ENCODE measurements at regions of chr6 and their contacts with region 1.

Region 1: GRCh38 chr6:1389369-1390132 is at the start of gene FOXF2:
- DNase-seq: no peak
- ATAC-seq: no peak
- H3K4me3 ChIP-seq: no peak within 1 kb of the TSS
- H3K4me3 Mint-ChIP-seq: peak within 1 kb of the TSS; percentile 74
- H3K27ac ChIP-seq: no peak within 1 kb of the TSS
- H3K27ac Mint-ChIP-seq: no peak within 1 kb of the TSS
- H3K4me1 ChIP-seq: peaks cover 14% of the 10 kb centered on the region
- H3K4me1 Mint-ChIP-seq: peaks cover 15 to 20% of the 10 kb centered on the region in 2 donors
- H3K27me3 ChIP-seq: peaks cover 56% of the 10 kb centered on the region
- H3K27me3 Mint-ChIP-seq: peaks cover 63 to 65% of the 10 kb centered on the region in 2 donors
- CTCF ChIP-seq: no peak
- total RNA-seq, gene FOXF2: not detected

Region 2: DNA sequence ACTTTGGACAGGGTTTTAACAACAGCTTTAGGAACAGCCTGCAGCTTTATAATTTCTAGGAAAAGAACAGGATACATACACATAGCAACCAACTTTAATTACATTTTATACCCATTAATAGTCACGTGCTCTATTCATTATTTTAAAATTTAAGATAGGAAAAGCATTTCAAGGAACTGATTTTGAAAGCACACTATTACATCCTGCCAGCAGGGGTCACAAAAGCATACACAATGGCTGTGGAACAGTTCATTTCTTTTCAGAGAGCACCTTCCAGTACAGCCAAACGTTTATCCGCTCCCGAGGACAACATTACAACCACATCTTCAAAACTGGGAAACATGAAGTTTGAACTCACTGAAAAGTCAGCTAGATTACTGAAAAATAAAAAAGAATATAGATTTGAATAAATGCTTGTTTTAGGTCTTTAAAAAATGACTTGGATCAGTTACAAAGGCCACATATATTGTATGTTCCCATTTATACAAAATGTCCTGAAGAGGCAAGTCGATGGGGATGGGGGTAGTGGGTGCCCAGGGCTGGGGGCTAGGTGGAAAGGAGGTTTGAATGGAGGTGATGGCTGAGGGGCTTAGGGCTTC is 592.0 kb before region 1 on chr6:
- intact Hi-C with region 1: loop called (anchors 5 kb)
- DNase-seq: peak in 1 of 2 donors; percentile 63
- ATAC-seq: peak in 2 of 3 donors; percentile 40 to 51
- H3K4me3 ChIP-seq: no peak overlapping the region
- H3K4me3 Mint-ChIP-seq: no peak overlapping the region
- H3K27ac ChIP-seq: no peak overlapping the region
- H3K27ac Mint-ChIP-seq: no peak overlapping the region
- H3K4me1 ChIP-seq: no peaks in the 10 kb centered on the region
- H3K4me1 Mint-ChIP-seq: no peaks in the 10 kb centered on the region
- H3K27me3 ChIP-seq: peaks cover 3% of the 10 kb centered on the region
- H3K27me3 Mint-ChIP-seq: peaks cover 22 to 38% of the 10 kb centered on the region in 2 donors
- CTCF ChIP-seq: peak; percentile 66

Measured in natural killer cell (primary cell).